ENCODE measurements at regions of chr20 and their contacts with region 1.

Region 1: GRCh38 chr20:330233-331149 is 5.1 kb downstream of the SOX12 start:
- DNase-seq: peak; percentile 60 to 66 (median 65)
- H3K4me3 ChIP-seq: no peak overlapping the region
- H3K4me3 Mint-ChIP-seq: peak overlapping the region in 2 of 8 donors; percentile 39
- H3K27ac ChIP-seq: no peak overlapping the region
- H3K27ac Mint-ChIP-seq: peak overlapping the region in 4 of 7 donors; percentile 17 to 72 (median 64)
- H3K4me1 ChIP-seq: peaks cover 15% of the 10 kb centered on the region
- H3K4me1 Mint-ChIP-seq: peaks cover 2 to 23% (median 11%) of the 10 kb centered on the region in 4 donors
- H3K27me3 ChIP-seq: no peaks in the 10 kb centered on the region
- H3K27me3 Mint-ChIP-seq: no peaks in the 10 kb centered on the region

Region 2: DNA sequence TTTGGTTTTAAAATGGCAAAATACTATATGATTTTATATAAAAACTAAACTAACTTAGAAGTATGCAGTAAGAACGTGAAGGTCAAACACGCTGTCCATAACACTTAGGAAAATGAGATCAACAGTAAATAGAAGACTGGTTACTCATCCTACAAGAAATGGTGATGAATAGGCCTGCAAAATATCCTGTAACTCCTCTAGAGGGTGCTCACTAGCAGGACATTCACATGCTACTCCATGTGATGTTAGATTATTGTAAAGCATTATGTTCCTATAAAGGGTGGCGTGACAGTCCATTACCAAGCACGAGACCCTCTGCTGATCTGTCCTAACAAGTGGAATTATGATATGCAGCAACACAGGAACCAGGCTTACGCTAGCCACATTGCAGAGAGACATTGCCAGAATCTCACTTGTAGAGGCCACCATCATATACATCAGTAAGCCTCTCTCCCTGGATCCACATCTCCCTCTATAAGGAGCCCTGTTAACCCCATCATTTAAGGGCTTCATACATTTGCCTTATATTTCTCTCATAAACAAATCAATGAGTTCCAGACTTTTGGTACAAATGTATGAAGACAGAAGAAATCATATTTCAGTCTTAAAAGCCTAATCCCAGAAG is 121.4 kb before region 1 on chr20:
- CTCF ChIA-PET with region 1: interaction called, 23 read pairs
- POLR2A ChIA-PET with region 1: no interaction called
- intact Hi-C with region 1: no loop called
- DNase-seq: peak in 4 of 5 donors; percentile 34 to 46 (median 38)
- H3K4me3 ChIP-seq: no peak overlapping the region
- H3K4me3 Mint-ChIP-seq: no peak overlapping the region
- H3K27ac ChIP-seq: no peak overlapping the region
- H3K27ac Mint-ChIP-seq: no peak overlapping the region
- H3K4me1 ChIP-seq: no peaks in the 10 kb centered on the region
- H3K4me1 Mint-ChIP-seq: no peaks in the 10 kb centered on the region
- H3K27me3 ChIP-seq: no peaks in the 10 kb centered on the region
- H3K27me3 Mint-ChIP-seq: peaks cover 0 to 4% of the 10 kb centered on the region in 2 donors

Region 3: GRCh38 chr20:258963-259362 is 71.5 kb before region 1 on chr20:
- CTCF ChIA-PET with region 1: interaction called, 79 read pairs
- POLR2A ChIA-PET with region 1: interaction called, 4 read pairs
- intact Hi-C with region 1: no loop called
- DNase-seq: no peak
- H3K4me3 ChIP-seq: no peak overlapping the region
- H3K4me3 Mint-ChIP-seq: no peak overlapping the region
- H3K27ac ChIP-seq: no peak overlapping the region
- H3K27ac Mint-ChIP-seq: peak overlapping the region in 1 of 7 donors; percentile 28
- H3K4me1 ChIP-seq: no peaks in the 10 kb centered on the region
- H3K4me1 Mint-ChIP-seq: peaks cover 0 to 14% (median 8%) of the 10 kb centered on the region in 4 donors
- H3K27me3 ChIP-seq: no peaks in the 10 kb centered on the region
- H3K27me3 Mint-ChIP-seq: peaks cover 0 to 15% of the 10 kb centered on the region in 2 donors

Region 4: DNA sequence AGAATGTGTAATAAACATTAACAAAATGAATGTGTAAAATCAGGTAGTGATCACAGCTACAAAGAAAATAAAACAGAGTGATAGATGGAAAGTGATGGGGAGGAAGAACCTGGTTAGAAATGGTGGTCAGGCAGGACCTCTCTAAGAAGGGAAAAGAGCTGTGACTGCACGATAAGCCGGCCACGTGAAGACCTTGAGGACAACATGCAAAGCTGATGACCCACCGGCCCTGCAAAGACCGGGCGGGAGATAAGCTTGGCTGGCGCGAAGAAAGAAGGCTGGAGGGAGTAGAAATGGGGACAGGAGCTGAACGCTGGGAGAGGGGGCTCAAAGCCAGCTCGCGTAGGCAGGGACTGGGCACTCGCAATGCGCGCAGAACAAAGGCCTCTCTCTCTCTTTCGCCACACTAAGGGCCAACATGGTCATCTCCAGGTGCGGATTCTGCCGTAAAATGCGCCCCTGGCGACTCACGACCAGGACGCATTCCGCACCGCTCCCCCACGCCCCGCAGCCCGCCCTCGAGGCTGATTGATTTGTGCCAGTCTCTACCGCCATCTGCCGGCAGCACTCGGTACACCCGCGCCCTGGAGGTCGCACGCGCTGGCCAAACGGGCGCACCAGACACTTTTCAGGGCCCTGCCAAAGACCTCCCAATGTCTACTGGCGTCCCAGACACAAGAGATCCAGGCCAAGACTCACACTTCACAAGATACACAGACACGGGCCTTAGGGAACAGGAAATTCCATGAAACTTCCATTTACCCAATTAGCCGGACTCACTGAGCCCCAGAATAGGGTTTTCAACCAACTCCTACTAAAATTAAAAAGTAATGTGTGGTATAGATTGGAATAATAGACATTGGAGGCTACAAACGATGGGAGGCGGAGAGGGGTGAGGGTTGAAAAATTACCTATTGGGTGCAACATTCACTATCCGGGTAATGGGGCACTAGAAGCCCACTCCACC is 63.6 kb before region 1 on chr20:
- CTCF ChIA-PET with region 1: interaction called, 79 read pairs
- POLR2A ChIA-PET with region 1: interaction called, 6 read pairs
- intact Hi-C with region 1: loop called (anchors 2 kb)
- DNase-seq: peak; percentile 82 to 87 (median 83)
- H3K4me3 ChIP-seq: peak overlapping the region in 1 of 2 donors; percentile 60
- H3K4me3 Mint-ChIP-seq: peak overlapping the region; percentile 80 to 87 (median 84)
- H3K27ac ChIP-seq: no peak overlapping the region
- H3K27ac Mint-ChIP-seq: peak overlapping the region in 4 of 7 donors; percentile 52 to 72 (median 64)
- H3K4me1 ChIP-seq: peaks cover 7% of the 10 kb centered on the region
- H3K4me1 Mint-ChIP-seq: peaks cover 7 to 11% (median 9%) of the 10 kb centered on the region in 4 donors
- H3K27me3 ChIP-seq: no peaks in the 10 kb centered on the region
- H3K27me3 Mint-ChIP-seq: peaks cover 3 to 21% of the 10 kb centered on the region in 2 donors

Region 5: DNA sequence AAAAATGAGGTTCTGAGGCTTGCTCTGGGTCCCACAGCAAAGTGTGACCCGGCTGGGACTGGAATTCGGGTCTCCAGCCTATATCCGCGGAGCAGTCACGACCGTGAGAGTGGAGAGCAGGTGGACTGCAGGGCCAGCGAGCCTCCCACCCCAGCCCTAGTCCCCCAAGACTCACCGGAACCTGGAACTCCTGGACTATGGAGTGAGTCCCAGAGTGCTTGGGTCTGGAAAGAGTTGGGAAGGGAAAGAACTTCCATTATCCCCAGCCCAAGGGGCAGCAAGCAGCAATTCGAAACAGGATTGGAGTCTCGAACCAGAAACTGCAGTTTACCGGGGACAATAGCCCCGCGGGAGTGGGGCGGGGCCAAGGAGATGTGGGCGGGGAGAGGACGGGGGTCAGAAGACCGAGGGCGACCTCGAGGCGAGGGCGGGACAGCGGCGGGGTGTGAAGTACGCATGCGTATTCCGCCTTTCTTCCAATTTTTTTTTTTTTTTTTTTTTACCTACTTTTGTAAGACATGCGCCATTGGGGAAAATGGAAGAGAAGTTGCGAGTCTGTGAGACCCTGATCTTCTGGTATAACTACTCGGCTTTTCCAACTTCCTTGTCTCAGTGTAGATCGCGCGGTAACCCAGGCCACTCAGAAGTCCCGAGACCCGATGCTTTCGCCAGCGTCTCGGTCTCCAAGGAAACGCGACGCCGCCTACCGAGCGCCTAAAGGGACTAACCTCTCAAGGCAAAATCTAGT is 40.2 kb before region 1 on chr20 and contains the start of gene C20orf96:
- CTCF ChIA-PET with region 1: interaction called, 11 read pairs
- POLR2A ChIA-PET with region 1: interaction called, 112 read pairs
- intact Hi-C with region 1: loop called (anchors 1 kb)
- DNase-seq: peak; percentile 77 to 85 (median 81)
- H3K4me3 ChIP-seq: peak within 1 kb of the TSS; percentile 66 to 68
- H3K4me3 Mint-ChIP-seq: peak within 1 kb of the TSS in 1 of 8 donors; percentile 34
- H3K27ac ChIP-seq: peak within 1 kb of the TSS; percentile 29
- H3K27ac Mint-ChIP-seq: peak within 1 kb of the TSS in 1 of 7 donors; percentile 73
- H3K4me1 ChIP-seq: peaks cover 19% of the 10 kb centered on the region
- H3K4me1 Mint-ChIP-seq: peaks cover 3 to 7% (median 5%) of the 10 kb centered on the region in 4 donors
- H3K27me3 ChIP-seq: no peaks in the 10 kb centered on the region
- H3K27me3 Mint-ChIP-seq: no peaks in the 10 kb centered on the region
- total RNA-seq, gene C20orf96: 1.8 to 2.5 TPM

Region 6: GRCh38 chr20:297098-297924 is 33.2 kb before region 1 on chr20 and contains the start of gene ZCCHC3:
- CTCF ChIA-PET with region 1: interaction called, 18 read pairs
- POLR2A ChIA-PET with region 1: interaction called, 112 read pairs
- intact Hi-C with region 1: loop called (anchors 1 kb)
- DNase-seq: peak; percentile 83 to 84 (median 83)
- H3K4me3 ChIP-seq: peak within 1 kb of the TSS; percentile 67 to 94
- H3K4me3 Mint-ChIP-seq: peak within 1 kb of the TSS; percentile 98 to 100 (median 99)
- H3K27ac ChIP-seq: peak within 1 kb of the TSS; percentile 85
- H3K27ac Mint-ChIP-seq: peak within 1 kb of the TSS; percentile 97 to 99 (median 99)
- H3K4me1 ChIP-seq: peaks cover 33% of the 10 kb centered on the region
- H3K4me1 Mint-ChIP-seq: peaks cover 30 to 56% (median 37%) of the 10 kb centered on the region in 4 donors
- H3K27me3 ChIP-seq: no peaks in the 10 kb centered on the region
- H3K27me3 Mint-ChIP-seq: no peaks in the 10 kb centered on the region
- total RNA-seq, gene ZCCHC3: 27.9 to 29.8 TPM

Region 7: DNA sequence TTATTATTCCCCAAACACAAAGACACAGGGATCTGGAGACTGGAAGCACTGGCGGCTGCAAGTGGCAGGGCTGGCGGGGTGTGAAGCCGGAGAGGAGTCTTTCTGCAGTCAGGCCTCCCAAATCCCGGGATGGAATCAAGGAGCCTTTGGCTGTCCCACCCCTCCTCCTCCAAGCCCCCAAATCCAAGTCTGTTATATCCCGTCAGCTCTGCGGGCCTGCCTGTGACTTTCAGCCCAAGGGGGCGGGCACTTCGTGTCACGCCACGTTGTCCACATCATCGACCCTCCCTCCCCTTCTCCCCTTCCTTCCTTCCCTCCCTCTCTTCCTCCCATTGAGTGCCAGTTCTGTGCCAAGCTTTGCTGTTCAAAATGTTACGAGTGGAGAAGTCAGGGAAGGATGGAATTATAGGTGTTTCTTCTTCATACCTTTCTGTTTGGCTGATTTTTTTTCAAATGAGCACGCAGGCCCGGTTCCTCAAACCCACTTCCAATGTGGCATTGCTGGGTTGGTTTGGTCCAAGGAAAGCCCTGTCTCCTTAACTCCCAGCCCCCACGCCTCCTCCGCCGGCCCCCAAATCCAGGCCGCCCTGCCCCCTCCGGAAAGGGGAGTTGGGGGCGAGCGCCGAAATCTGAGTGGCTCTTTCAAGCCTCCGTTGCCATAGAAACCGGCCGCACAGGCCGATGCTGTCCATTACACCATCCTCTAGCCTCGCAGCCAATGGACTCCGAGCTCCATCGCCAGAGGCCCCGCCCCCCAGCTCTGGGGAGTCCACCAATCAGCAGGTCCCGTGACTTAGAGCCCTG is 20.4 kb before region 1 on chr20:
- CTCF ChIA-PET with region 1: interaction called, 12 read pairs
- POLR2A ChIA-PET with region 1: interaction called, 8 read pairs
- intact Hi-C with region 1: no loop called
- DNase-seq: peak; percentile 56 to 74 (median 59)
- H3K4me3 ChIP-seq: no peak overlapping the region
- H3K4me3 Mint-ChIP-seq: peak overlapping the region; percentile 49 to 78 (median 68)
- H3K27ac ChIP-seq: no peak overlapping the region
- H3K27ac Mint-ChIP-seq: peak overlapping the region in 5 of 7 donors; percentile 36 to 80 (median 49)
- H3K4me1 ChIP-seq: peaks cover 12% of the 10 kb centered on the region
- H3K4me1 Mint-ChIP-seq: peaks cover 10 to 12% (median 10%) of the 10 kb centered on the region in 4 donors
- H3K27me3 ChIP-seq: no peaks in the 10 kb centered on the region
- H3K27me3 Mint-ChIP-seq: peaks cover 0 to 1% of the 10 kb centered on the region in 2 donors

Measured in CD4-positive, alpha-beta memory T cell (primary cell).